Heart right ventricle (tissue), 16 donors: ENCODE measurements at regions of chr4 and their contacts with region 1.

Region 1: DNA sequence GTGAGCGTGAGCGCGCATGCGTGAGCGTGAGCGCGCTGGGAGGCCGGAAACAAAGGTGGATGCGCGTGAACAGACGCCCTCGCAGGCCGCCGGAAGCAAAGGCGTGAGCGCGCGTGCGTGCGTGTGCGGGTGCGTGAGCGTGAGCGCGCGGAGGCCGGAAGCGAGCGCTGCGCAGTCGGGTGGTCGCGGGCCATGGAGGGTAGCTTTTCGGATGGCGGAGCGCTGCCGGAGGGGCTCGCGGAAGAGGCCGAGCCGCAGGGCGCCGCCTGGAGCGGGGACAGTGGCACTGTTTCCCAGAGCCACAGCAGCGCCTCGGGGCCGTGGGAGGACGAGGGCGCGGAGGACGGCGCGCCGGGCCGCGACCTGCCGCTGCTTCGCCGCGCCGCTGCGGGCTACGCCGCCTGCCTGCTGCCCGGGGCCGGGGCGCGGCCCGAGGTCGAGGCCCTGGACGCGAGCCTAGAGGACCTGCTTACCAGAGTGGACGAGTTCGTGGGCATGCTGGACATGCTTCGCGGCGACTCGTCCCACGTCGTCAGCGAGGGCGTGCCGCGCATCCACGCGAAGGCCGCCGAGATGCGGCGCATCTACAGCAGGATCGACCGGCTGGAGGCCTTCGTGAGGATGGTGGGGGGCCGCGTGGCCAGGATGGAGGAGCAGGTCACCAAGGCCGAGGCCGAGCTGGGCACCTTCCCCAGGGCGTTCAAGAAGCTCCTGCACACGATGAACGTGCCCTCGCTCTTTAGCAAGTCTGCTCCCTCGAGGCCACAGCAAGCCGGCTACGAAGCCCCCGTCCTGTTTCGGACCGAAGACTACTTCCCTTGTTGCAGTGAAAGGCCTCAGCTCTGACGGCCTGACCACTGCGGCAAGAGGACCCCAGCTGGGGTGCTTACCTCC is at the start of gene BLOC1S4:
- DNase-seq: peak; percentile 87 to 90
- ATAC-seq: peak; percentile 91 to 96 (median 94)
- H3K4me3 ChIP-seq: peak within 1 kb of the TSS; percentile 55 to 88 (median 76)
- H3K27ac ChIP-seq: peak within 1 kb of the TSS; percentile 87 to 98 (median 94)
- H3K4me1 ChIP-seq: peaks cover 0 to 40% (median 30%) of the 10 kb centered on the region in 9 donors
- H3K27me3 ChIP-seq: no peaks in the 10 kb centered on the region
- CTCF ChIP-seq: peak in 4 of 9 donors; percentile 19 to 53 (median 30)
- total RNA-seq, gene BLOC1S4: 4.4 to 10.2 (median 7.0) TPM

Region 2: DNA sequence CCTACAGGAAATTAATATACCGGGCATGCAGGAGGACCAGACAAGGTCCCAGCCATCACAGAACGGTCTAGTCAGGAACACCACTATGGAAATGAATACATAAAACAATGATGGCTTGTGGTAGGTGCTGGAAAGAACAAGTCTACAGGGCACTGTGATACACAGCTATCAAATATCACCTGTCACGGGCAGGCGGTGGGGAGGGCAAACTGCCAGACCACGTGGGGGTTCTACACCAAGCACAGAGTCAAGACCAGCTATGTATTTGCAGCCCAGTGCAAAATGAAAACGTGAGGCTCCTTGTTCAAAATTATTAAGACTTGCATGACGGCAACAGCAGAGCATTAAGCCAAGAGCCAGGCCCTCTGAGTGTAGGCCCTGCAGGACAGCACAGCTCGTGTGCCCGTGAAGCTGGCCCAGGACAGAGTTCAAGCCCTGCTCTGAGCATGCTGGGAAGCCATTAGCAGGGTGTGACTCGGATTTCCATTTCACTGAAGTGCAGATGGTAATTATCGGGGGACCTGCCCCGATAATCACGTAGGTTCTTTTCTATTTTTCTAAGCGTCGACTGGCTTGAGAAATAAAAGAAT is 599.5 kb before region 1 on chr4:
- intact Hi-C with region 1: no loop called
- DNase-seq: no peak
- ATAC-seq: no peak
- H3K4me3 ChIP-seq: no peak overlapping the region
- H3K27ac ChIP-seq: no peak overlapping the region
- H3K4me1 ChIP-seq: no peaks in the 10 kb centered on the region
- H3K27me3 ChIP-seq: peaks cover 0 to 67% (median 48%) of the 10 kb centered on the region in 7 donors
- CTCF ChIP-seq: no peak

Region 3: DNA sequence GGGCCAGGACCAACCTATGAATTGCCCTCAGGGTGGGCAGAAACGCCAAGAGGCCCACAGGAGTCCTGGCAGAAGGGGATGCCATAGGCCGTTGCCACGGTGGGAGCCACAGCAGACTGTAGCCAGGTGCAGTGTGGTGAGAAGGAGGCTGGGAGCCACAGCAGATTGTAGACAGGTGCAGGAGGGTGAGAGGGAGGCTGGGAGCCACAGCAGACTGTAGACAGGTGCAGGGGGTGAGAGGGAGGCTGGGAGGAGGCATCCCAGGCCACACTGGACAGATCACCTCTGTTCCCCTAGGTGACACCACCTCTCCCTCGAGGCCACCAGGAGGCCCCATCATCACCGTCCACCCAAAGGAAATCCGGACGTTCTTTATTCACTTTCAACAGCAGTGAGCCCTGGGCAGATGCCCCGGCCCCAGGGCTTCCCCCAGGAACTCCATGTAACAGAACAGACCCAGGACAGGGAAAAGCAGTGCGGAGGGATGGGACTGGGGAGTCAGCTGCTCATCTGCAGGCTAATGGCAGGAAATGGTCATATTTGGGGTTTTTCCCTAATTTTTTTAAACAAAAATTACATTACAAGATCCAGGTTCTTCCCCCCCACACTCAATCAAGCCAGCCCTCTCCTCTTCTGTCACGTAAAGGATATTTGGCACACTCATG is 95.2 kb before region 1 on chr4:
- intact Hi-C with region 1: no loop called
- DNase-seq: no peak
- ATAC-seq: peak in 1 of 8 donors; percentile 50
- H3K4me3 ChIP-seq: no peak overlapping the region
- H3K27ac ChIP-seq: no peak overlapping the region
- H3K4me1 ChIP-seq: no peaks in the 10 kb centered on the region
- H3K27me3 ChIP-seq: no peaks in the 10 kb centered on the region
- CTCF ChIP-seq: no peak

Region 4: GRCh38 chr4:6640292-6641163 is 75.7 kb before region 1 on chr4 and contains the start of gene MRFAP1:
- intact Hi-C with region 1: loop called in 1 of 10 experiments (anchors 2 kb)
- DNase-seq: peak; percentile 94 to 96
- ATAC-seq: peak; percentile 92 to 97 (median 96)
- H3K4me3 ChIP-seq: peak within 1 kb of the TSS; percentile 74 to 96 (median 86)
- H3K27ac ChIP-seq: peak within 1 kb of the TSS; percentile 86 to 93 (median 90)
- H3K4me1 ChIP-seq: peaks cover 14 to 40% (median 34%) of the 10 kb centered on the region in 9 donors
- H3K27me3 ChIP-seq: no peaks in the 10 kb centered on the region
- CTCF ChIP-seq: no peak
- total RNA-seq, gene MRFAP1: 222 to 268 (median 248) TPM

Region 5: DNA sequence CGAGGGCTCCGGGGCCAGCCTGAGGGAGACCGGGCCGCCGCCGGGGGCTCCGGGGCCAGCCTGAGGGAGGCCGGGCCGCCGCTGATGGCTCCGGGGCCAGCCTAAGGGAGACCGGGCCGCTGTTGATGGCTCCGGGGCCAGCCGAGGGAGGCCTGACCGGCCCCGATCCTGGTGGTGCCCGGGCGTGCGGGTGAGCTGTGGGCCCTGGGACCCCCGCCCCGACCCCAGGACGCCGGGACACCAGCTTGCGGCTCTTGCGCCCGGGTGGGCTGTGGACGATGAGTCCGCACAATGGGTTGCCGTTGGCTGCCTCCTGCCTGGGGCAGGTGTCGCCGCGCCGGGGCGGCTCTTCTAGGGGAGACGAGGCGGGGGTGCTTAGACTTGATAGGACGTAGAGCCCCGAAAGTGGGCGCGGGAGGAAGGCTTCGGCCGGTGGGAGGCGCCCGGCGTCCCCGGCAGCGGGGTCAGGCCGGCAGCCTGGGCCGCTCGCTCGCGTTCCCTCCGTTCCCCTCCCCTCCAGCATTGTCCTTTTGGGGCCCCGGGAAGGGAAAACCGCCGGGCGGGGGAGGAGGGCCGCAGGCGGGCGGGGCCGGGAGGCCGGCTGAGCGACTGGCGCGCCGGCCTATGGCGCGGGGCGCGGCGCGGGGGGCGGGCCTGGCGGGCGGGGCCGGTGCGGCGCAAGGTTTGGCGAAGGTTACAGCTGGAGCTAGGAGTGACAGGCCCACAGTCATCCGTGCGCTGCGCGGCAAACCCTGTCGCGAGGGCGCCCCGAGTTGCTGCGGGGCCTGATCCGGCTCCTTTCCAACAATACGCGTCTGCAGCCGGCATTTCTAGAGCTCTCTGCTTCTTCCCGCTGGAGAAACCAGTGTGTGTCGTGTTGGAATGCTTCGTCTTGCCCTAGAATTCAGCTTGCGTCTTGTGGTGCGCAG is 67.1 kb after region 1 on chr4:
- intact Hi-C with region 1: loop called in 7 of 10 experiments (anchors 2 to 5 kb)
- DNase-seq: peak; percentile 91 to 92
- ATAC-seq: peak; percentile 86 to 90 (median 90)
- H3K4me3 ChIP-seq: peak overlapping the region; percentile 89 to 100 (median 98)
- H3K27ac ChIP-seq: peak overlapping the region; percentile 92 to 100 (median 100)
- H3K4me1 ChIP-seq: peaks cover 7 to 62% (median 55%) of the 10 kb centered on the region in 9 donors
- H3K27me3 ChIP-seq: no peaks in the 10 kb centered on the region
- CTCF ChIP-seq: peak in 6 of 9 donors; percentile 18 to 56 (median 43)

Region 6: DNA sequence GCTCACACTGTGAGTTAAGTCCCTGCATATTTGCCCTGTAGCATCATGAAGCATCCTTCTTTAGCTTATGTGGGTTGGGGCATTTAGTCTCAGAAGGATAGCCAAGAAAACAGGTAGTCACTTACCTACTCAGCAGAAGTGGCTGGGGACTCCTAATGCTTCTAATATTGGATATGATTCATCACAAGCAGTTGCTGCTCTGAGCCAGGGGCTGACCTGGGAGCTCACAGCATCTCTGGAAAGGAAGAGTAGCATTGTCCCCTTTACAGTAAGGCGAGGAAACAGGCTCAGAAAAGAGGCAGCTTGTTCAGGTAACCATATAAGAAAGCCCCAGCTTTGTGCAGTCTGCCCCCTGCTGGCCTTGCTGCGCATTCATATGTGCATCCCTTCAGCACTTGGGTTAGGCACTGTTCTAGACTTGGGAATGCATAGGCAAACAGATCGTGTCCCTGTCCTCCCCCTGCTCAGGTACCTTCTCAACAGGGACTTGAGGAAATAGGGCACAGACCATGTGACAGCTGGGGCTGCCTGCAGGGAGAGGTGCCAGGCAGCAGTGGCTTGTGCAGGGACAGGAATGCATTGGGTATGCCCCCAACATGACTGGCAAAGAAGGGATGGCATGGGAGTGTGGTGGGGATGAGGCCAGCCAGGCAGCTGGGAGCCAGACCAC is 157.7 kb after region 1 on chr4:
- intact Hi-C with region 1: loop called (anchors 1 to 5 kb)
- DNase-seq: peak; percentile 60 to 74
- ATAC-seq: peak; percentile 40 to 83 (median 72)
- H3K4me3 ChIP-seq: no peak overlapping the region
- H3K27ac ChIP-seq: peak overlapping the region in 1 of 10 donors; percentile 2
- H3K4me1 ChIP-seq: peaks cover 3 to 57% (median 32%) of the 10 kb centered on the region in 9 donors
- H3K27me3 ChIP-seq: no peaks in the 10 kb centered on the region
- CTCF ChIP-seq: peak; percentile 56 to 90 (median 87)

Region 7: DNA sequence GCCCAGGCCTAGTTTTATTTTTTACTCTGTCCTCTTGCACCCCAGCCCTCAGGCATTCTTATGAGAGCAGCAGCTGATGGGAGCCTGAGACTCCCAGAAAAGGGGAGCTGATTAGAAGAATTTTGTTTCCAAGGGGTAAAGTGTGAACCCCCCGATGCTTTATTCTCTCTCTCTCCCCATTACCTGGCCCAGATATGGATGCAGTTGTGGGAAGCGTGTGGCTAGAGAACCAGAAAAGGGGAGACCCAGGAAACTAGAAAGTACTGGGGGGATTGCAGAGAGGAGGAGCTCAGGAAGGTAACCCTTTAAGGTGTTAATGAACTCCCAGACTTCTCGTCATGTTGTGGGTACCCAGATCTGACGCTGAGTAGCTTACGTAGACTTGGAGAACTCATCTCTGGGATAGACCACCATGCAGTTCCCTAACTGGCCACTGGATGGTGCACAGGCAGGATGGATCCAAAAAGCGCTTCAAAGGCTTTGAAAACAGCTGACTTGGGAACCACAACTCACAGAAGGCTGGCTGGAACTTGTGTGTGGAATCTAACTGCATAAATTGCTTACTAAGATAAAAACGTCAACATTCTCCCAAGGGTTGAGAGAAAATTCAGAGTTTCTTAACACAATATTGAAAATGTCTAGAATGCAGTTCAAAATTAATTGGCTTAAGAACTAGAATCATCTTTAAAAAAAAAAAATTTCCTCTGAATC is 258.0 kb after region 1 on chr4:
- intact Hi-C with region 1: loop called in 1 of 10 experiments (anchors 5 kb)
- DNase-seq: peak; percentile 79 to 87
- ATAC-seq: peak; percentile 74 to 95 (median 92)
- H3K4me3 ChIP-seq: no peak overlapping the region
- H3K27ac ChIP-seq: peak overlapping the region in 1 of 10 donors; percentile 13
- H3K4me1 ChIP-seq: peaks cover 0 to 25% (median 11%) of the 10 kb centered on the region in 9 donors
- H3K27me3 ChIP-seq: no peaks in the 10 kb centered on the region
- CTCF ChIP-seq: peak; percentile 85 to 99 (median 96)

Region 8: DNA sequence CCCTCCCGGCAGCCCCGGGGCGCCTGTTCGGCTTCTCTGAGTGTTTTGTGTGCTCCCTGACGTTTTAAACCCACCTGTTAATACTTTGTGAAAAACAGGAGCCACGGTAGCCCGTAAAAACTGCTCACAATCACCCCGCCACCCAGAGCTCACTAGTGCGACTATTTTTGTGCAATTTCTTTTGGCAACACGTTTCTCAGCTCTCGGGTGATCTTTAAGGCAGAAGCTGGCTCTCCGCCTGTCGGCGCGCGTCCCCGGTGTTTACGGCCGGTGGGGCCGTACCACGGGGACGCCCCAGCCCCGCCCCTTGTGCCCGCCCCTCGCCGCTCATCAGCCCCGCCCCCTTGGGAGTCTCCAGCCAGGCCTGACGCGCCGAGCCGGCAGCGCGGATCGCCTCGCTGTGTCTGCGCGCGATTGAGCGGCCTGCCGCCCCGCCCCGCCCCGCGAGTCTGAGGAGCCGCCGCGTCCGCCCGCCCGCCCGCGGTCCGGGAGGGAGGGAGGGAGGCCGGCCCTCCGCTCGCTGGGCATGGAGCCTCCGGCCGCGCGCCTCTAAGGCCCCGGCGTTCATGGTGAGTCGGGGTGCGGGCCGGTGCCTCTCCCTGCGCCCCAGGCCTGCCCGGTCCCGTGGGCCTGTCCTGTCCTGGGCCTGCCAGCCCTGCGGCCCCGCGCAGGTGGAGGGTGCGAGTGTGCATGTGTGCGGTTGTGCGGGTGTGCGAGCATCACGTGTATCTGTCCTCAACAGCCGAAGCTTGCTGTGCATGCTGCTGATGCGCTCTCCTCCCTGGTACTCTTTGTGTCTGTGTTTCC is 270.7 kb after region 1 on chr4:
- intact Hi-C with region 1: loop called in 7 of 10 experiments (anchors 5 to 10 kb)
- DNase-seq: peak; percentile 94 to 97
- ATAC-seq: peak; percentile 95 to 98 (median 96)
- H3K4me3 ChIP-seq: peak overlapping the region; percentile 64 to 98 (median 88)
- H3K27ac ChIP-seq: peak overlapping the region; percentile 84 to 98 (median 94)
- H3K4me1 ChIP-seq: peaks cover 13 to 85% (median 57%) of the 10 kb centered on the region in 9 donors
- H3K27me3 ChIP-seq: no peaks in the 10 kb centered on the region
- CTCF ChIP-seq: peak in 2 of 9 donors; percentile 27 to 28